ENCODE measurements at regions of chr1 and their contacts with region 1.

Region 1: GRCh38 chr1:235075188-235075926 is 53.3 kb downstream of the TOMM20 start:
- DNase-seq: peak; percentile 70
- ATAC-seq: peak; percentile 72
- H3K4me3 ChIP-seq: peak overlapping the region in 4 of 5 experiments; percentile 1 to 42 (median 27)
- H3K4me3 Mint-ChIP-seq: peak overlapping the region; percentile 81
- H3K27ac ChIP-seq: peak overlapping the region; percentile 5 to 10
- H3K27ac Mint-ChIP-seq: peak overlapping the region; percentile 98
- H3K4me1 ChIP-seq: peaks cover 17 to 31% of the 10 kb centered on the region in 2 donors
- H3K4me1 Mint-ChIP-seq: peaks cover 33% of the 10 kb centered on the region
- H3K27me3 ChIP-seq: no peaks in the 10 kb centered on the region
- H3K27me3 Mint-ChIP-seq: no peaks in the 10 kb centered on the region
- CTCF ChIP-seq: no peak

Region 2: DNA sequence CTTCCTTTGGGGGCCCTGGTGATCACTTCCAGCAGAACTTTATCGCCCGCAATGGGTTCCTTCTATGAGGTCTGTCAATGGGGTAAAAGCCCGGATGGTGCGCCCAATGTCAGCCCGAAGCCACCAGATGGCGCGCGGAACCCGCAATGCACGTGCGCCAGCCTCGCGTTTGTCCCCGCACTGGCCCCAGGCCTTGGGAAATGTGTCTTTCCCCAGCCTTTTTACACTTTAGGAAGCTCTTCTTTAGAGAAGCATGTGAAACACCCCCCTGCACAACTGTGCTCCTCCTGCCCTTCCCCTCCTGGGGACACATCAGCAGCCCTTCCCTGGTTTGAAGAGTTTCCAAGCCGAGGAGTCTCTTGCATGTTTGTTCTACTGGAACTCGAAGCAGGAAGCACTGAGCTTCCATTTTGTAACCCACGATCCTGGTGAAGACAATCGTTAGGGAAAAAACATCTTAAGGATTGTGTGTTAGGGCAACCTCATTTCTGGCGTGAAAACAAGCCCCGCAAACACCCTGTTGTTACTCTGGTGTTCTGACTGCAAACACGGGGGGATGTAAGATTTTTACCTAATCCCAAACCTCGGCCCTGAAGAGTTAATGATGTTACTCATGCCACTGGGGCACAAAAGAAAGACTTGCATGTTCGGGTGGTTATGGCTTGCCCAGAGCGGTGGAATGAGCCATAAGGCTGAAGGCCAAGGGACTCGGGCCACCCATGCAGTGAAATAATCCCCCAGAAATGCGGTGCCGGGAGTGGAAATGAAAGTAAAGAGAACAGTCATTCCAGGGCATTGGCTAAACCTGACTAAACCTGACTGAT is 576.0 kb before region 1 on chr1:
- CTCF ChIA-PET with region 1: interaction called, 10 read pairs
- POLR2A ChIA-PET with region 1: no interaction called
- intact Hi-C with region 1: no loop called
- DNase-seq: peak; percentile 86
- ATAC-seq: peak; percentile 97
- H3K4me3 ChIP-seq: peak overlapping the region in 2 of 5 experiments; percentile 2 to 27
- H3K4me3 Mint-ChIP-seq: peak overlapping the region; percentile 67
- H3K27ac ChIP-seq: no peak overlapping the region
- H3K27ac Mint-ChIP-seq: peak overlapping the region; percentile 70
- H3K4me1 ChIP-seq: peaks cover 3 to 15% of the 10 kb centered on the region in 2 donors
- H3K4me1 Mint-ChIP-seq: peaks cover 25% of the 10 kb centered on the region
- H3K27me3 ChIP-seq: no peaks in the 10 kb centered on the region
- H3K27me3 Mint-ChIP-seq: no peaks in the 10 kb centered on the region
- CTCF ChIP-seq: peak; percentile 92

Region 3: DNA sequence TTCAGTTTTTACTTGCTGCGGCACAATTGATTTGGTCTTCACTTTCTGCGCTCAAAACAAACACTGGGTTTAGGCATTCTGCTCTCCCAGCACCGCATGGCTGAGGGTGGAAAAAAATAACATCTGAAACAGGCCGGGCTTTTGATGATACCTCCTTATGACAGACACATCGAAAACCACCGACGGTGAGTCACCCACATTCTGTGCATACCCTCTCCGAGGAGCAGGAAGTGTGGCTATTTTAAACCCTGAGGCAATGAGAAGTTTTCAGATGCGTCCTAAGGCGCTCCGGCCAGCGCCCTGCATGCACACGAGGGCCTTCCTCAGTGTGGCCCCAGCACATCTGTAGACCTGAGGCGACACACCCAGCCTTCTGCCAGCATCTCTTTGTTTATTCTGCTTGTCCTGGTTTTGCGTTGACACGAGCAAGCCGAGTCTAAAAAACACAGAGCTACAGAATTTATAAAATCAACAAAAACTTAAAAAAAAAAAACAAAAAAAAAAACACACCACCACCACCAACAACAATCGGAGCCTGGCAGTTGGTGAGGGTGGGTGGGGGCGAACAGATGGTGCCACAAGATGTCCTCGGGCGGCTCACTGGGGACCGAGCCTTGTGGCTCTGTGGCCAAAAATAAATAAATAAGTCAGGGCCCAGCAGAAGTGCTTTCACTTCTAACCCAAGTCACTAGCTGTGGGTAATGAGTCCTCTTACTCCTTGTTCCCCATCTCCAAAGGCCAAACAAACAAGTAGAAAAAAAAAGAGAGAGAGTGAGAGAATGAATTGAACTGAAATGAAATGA is 302.8 kb before region 1 on chr1:
- CTCF ChIA-PET with region 1: no interaction called
- POLR2A ChIA-PET with region 1: no interaction called
- intact Hi-C with region 1: loop called (anchors 1 kb)
- DNase-seq: peak; percentile 83
- ATAC-seq: peak; percentile 83
- H3K4me3 ChIP-seq: peak overlapping the region; percentile 2 to 49 (median 33)
- H3K4me3 Mint-ChIP-seq: peak overlapping the region; percentile 82
- H3K27ac ChIP-seq: peak overlapping the region; percentile 90 to 91
- H3K27ac Mint-ChIP-seq: peak overlapping the region; percentile 95
- H3K4me1 ChIP-seq: peaks cover 29 to 39% of the 10 kb centered on the region in 2 donors
- H3K4me1 Mint-ChIP-seq: peaks cover 49% of the 10 kb centered on the region
- H3K27me3 ChIP-seq: peaks cover 0 to 9% (median 5%) of the 10 kb centered on the region in 4 experiments
- H3K27me3 Mint-ChIP-seq: no peaks in the 10 kb centered on the region
- CTCF ChIP-seq: no peak

Region 4: DNA sequence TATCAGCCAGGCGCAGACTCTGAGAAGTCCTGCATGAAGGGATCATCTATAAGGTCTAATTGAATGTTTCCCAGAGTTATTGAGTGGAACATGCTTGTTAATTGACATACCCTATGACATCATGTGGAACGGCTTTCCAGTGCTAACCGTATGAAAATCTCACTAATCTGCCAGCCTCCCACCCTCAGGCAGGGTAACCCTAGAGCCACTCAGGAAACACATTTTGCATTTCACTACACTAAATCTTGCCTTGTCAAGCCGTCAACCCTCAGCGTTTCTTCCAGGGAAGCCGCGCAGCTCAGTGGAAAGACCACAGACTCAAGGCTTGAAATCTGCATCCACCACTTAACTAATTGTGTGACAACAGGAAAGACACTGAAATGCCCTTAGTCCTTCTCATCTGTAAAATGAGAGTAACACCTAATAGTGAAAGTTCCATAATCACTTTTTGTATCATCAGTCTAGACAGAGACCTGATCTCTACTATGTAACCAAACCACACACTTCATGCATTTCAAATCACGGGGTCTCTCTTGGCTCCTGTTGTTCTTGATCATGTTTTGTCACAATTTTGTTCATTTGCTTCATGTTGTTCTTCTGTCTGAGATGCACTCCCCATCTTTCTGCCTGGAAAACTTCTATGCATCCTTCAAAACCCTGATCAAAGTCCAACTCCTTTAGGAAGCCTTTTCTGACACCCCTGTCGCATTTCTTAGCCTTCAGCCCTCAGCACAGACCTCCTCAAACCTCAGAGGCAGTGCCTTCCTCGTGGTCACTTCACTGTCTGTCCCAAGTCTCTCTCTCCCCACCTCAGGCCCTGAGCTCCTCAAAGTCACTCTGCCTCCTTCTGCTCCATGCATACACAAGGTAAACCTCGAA is 193.2 kb before region 1 on chr1:
- CTCF ChIA-PET with region 1: no interaction called
- POLR2A ChIA-PET with region 1: no interaction called
- intact Hi-C with region 1: loop called (anchors 5 kb)
- DNase-seq: peak; percentile 20
- ATAC-seq: peak; percentile 8
- H3K4me3 ChIP-seq: no peak overlapping the region
- H3K4me3 Mint-ChIP-seq: peak overlapping the region; percentile 70
- H3K27ac ChIP-seq: no peak overlapping the region
- H3K27ac Mint-ChIP-seq: peak overlapping the region; percentile 66
- H3K4me1 ChIP-seq: peaks cover 14 to 20% of the 10 kb centered on the region in 2 donors
- H3K4me1 Mint-ChIP-seq: peaks cover 32% of the 10 kb centered on the region
- H3K27me3 ChIP-seq: no peaks in the 10 kb centered on the region
- H3K27me3 Mint-ChIP-seq: no peaks in the 10 kb centered on the region
- CTCF ChIP-seq: no peak

Region 5: GRCh38 chr1:234978397-234979295 is 96.7 kb before region 1 on chr1:
- CTCF ChIA-PET with region 1: interaction called, 3 read pairs
- POLR2A ChIA-PET with region 1: interaction called, 3 read pairs
- intact Hi-C with region 1: loop called (anchors 2 kb)
- DNase-seq: peak; percentile 87
- ATAC-seq: peak; percentile 74
- H3K4me3 ChIP-seq: peak overlapping the region in 3 of 5 experiments; percentile 18 to 42 (median 34)
- H3K4me3 Mint-ChIP-seq: peak overlapping the region; percentile 88
- H3K27ac ChIP-seq: peak overlapping the region; percentile 64 to 73
- H3K27ac Mint-ChIP-seq: peak overlapping the region; percentile 98
- H3K4me1 ChIP-seq: peaks cover 42 to 52% of the 10 kb centered on the region in 2 donors
- H3K4me1 Mint-ChIP-seq: peaks cover 62% of the 10 kb centered on the region
- H3K27me3 ChIP-seq: no peaks in the 10 kb centered on the region
- H3K27me3 Mint-ChIP-seq: no peaks in the 10 kb centered on the region
- CTCF ChIP-seq: peak; percentile 22

Region 6: GRCh38 chr1:235050911-235051360 is 24.4 kb before region 1 on chr1:
- CTCF ChIA-PET with region 1: interaction called, 3 read pairs
- POLR2A ChIA-PET with region 1: no interaction called
- intact Hi-C with region 1: loop called (anchors 2 kb)
- DNase-seq: no peak
- ATAC-seq: peak; percentile 55
- H3K4me3 ChIP-seq: no peak overlapping the region
- H3K4me3 Mint-ChIP-seq: peak overlapping the region; percentile 32
- H3K27ac ChIP-seq: no peak overlapping the region
- H3K27ac Mint-ChIP-seq: peak overlapping the region; percentile 74
- H3K4me1 ChIP-seq: peaks cover 13 to 22% of the 10 kb centered on the region in 2 donors
- H3K4me1 Mint-ChIP-seq: peaks cover 41% of the 10 kb centered on the region
- H3K27me3 ChIP-seq: no peaks in the 10 kb centered on the region
- H3K27me3 Mint-ChIP-seq: no peaks in the 10 kb centered on the region
- CTCF ChIP-seq: no peak